ENCODE measurements at regions of chr3 and their contacts with region 1.

Region 1: DNA sequence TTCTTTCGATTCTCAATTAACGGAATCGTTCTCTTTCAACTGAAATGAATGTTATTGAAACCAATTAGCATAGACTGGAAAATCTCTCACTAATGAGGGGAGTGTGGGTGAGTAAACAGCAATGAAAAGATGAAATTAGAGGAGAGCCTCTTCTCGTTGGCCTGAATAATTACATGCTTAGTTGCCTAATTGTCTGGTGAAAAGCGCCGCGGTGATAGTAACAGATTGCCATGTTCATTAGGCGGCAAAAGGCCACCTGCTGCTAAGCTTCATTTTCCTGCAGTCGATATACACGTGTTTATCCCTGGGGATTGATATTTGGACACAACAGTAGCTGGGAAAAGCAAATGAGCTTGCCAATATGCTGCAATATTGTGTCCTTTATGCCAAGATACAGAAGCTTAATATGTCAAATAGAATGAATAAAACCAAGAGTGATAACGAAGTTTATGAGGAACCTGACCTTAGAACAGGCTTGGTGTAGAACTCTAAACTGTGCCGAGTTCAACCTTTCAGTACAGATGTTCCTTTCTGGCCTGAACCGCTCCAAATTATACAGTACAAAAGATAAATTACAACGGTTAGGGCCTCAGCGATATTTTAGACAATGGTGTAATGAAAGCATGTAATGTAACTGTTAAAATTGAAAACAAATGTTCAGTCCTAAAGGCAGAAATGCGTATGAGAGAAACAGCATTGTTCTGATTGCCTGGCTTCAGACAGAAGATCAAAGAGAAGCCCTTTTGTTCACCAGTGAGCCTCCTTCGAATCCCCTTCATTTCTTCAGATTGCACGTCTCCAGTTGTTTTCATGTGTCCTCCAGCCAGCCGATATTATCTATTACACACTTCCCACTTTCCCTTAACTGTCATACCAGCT is 185.2 kb downstream of the SHOX2 start:
- DNase-seq: no peak
- ATAC-seq: no peak
- H3K4me3 ChIP-seq: no peak overlapping the region
- H3K27ac ChIP-seq: no peak overlapping the region
- H3K4me1 ChIP-seq: no peaks in the 10 kb centered on the region
- H3K27me3 ChIP-seq: no peaks in the 10 kb centered on the region
- CTCF ChIP-seq: no peak

Region 2: GRCh38 chr3:158233791-158234190 is 312.7 kb after region 1 on chr3:
- CTCF ChIA-PET with region 1: no interaction called
- POLR2A ChIA-PET with region 1: interaction called, 10 read pairs
- in situ Hi-C with region 1: no loop called
- intact Hi-C with region 1: no loop called
- DNase-seq: no peak
- ATAC-seq: no peak
- H3K4me3 ChIP-seq: no peak overlapping the region
- H3K27ac ChIP-seq: no peak overlapping the region
- H3K4me1 ChIP-seq: no peaks in the 10 kb centered on the region
- H3K27me3 ChIP-seq: no peaks in the 10 kb centered on the region
- CTCF ChIP-seq: no peak

Measured in Panc1 (cell line).